Activated CD4-positive, alpha-beta T cell treated with anti-CD3 and anti-CD28 coated beads for 36 hours (primary cell): ENCODE measurements at regions of chrX and their contacts with region 1.

Region 1: GRCh38 chrX:119981286-119982070 is 37.9 kb upstream of the NKAP start:
- DNase-seq: peak; percentile 42
- ATAC-seq: no peak
- H3K4me3 Mint-ChIP-seq: no peak overlapping the region
- H3K27ac Mint-ChIP-seq: no peak overlapping the region
- H3K4me1 Mint-ChIP-seq: no peaks in the 10 kb centered on the region
- H3K27me3 Mint-ChIP-seq: peaks cover 6% of the 10 kb centered on the region

Region 2: GRCh38 chrX:120144178-120144844 is 162.8 kb after region 1 on chrX:
- CTCF ChIA-PET with region 1: no interaction called
- POLR2A ChIA-PET with region 1: no interaction called
- intact Hi-C with region 1: loop called in 1 of 2 experiments (anchors 10 kb)
- DNase-seq: peak; percentile 4
- ATAC-seq: no peak
- H3K4me3 Mint-ChIP-seq: no peak overlapping the region
- H3K27ac Mint-ChIP-seq: no peak overlapping the region
- H3K4me1 Mint-ChIP-seq: peaks cover 19% of the 10 kb centered on the region
- H3K27me3 Mint-ChIP-seq: no peaks in the 10 kb centered on the region